Sciatic nerve (tissue), 2 donors: ENCODE measurements at regions of chr16 and their contacts with region 1.

Region 1: DNA sequence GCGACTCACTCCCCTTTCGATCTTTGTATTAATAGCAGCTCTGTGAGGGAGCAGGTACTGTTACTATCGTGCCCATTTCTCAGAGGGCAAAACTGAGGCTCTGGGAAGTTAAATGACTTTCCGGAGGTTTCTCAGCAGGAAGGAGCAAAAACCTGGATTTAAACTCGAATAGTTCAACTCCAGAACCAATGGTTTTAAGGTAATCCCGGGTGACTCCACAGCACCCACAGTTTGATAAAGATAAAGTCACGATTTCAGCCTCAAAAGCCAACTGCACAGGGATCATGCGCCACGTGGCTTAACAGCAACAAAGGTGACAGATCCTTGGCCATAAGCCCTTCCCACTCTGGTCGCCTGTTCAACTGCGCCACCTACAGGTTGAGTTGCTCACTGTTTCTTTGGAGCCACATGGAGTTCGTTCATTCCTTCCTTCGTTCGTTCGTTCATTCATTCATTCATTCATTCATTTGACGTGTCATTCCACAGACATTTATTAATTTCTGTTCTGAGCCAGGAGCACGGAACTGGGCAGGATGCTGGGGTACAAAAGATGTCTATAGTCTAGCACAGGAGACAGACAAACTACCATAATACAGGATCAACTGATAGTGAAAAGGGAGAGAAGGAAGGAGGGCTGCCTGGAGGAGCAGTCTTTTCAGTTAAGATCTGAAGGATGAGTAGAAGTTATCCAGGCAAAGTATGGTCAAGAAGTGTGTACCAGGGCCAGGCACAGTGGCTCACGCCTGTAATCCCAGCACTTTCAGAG is 134.8 kb downstream of the HS3ST2 start:
- DNase-seq: peak; percentile 71
- ATAC-seq: peak; percentile 72

Region 2: DNA sequence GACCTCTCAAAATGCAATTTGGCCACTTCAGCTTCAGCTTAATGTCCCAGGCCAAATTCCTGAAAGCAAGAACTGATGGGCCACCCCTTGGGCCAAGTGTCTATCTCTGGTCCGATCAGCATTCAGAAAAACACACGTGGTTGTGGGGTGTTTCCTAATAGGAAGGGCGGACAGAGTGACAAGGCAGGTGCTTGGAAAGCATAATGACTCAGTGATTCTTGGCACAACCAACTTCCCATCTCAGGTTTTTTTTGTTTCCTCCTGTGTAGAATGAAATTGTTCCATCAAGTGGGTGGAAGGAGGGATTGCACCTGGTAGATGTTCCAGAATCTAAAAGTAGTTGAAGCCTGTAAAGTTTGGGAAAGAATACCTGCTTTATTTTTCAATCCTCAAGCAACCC is 20.8 kb after region 1 on chr16:
- intact Hi-C with region 1: loop called (anchors 1 kb)
- DNase-seq: no peak
- ATAC-seq: no peak